Activated CD8-positive, alpha-beta T cell treated with anti-CD3 and anti-CD28 coated beads for 36 hours (primary cell): ENCODE measurements at regions of chr7 and their contacts with region 1.

Region 1: GRCh38 chr7:28389504-28390395 is 22.6 kb upstream of the CREB5 start:
- DNase-seq: peak; percentile 3
- ATAC-seq: no peak
- H3K4me3 Mint-ChIP-seq: no peak overlapping the region
- H3K27ac Mint-ChIP-seq: no peak overlapping the region
- H3K4me1 Mint-ChIP-seq: no peaks in the 10 kb centered on the region
- H3K27me3 Mint-ChIP-seq: peaks cover 17% of the 10 kb centered on the region
- CTCF ChIP-seq: peak; percentile 74

Region 2: GRCh38 chr7:28378574-28379149 is 11.1 kb before region 1 on chr7:
- CTCF ChIA-PET with region 1: no interaction called
- POLR2A ChIA-PET with region 1: no interaction called
- intact Hi-C with region 1: no loop called
- DNase-seq: no peak
- ATAC-seq: no peak
- H3K4me3 Mint-ChIP-seq: no peak overlapping the region
- H3K27ac Mint-ChIP-seq: no peak overlapping the region
- H3K4me1 Mint-ChIP-seq: no peaks in the 10 kb centered on the region
- H3K27me3 Mint-ChIP-seq: peaks cover 3% of the 10 kb centered on the region
- CTCF ChIP-seq: no peak

Region 3: DNA sequence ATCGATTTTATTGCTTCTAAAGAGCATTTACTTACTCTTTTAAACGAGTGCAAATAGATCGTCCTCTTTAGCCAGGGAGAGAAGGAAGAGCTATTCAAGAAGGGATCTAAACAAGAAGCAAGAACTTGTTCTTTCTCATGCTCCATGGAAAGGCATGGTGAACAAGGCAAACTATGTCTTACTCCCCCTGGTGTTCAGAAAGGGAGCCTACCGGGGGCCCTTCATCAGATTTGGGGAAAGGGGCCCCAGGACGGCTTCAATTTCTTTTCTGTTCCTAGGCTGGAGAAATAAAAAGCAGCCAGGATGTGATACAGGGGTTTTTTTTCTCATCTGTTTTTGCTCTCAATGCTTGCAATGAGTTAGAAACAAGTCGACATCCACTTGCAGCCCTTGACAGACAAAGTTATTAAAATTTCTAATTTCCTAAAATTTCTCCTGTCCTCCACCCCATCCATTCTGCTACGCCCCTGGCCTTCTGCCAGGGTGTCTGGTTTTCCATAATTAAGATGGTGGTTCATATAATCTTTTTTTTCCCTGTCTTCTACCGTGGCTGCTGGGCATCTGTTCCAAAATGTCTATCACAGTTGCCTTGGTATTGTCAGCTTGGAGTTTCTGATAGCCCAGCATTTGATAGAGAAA is 237.0 kb after region 1 on chr7:
- CTCF ChIA-PET with region 1: interaction called, 3 read pairs
- POLR2A ChIA-PET with region 1: no interaction called
- intact Hi-C with region 1: loop called (anchors 5 kb)
- DNase-seq: peak; percentile 39
- ATAC-seq: no peak
- H3K4me3 Mint-ChIP-seq: no peak overlapping the region
- H3K27ac Mint-ChIP-seq: no peak overlapping the region
- H3K4me1 Mint-ChIP-seq: no peaks in the 10 kb centered on the region
- H3K27me3 Mint-ChIP-seq: no peaks in the 10 kb centered on the region
- CTCF ChIP-seq: peak; percentile 55

Region 4: GRCh38 chr7:28853834-28854749 is 464.3 kb after region 1 on chr7:
- CTCF ChIA-PET with region 1: interaction called, 5 read pairs
- POLR2A ChIA-PET with region 1: no interaction called
- intact Hi-C with region 1: loop called (anchors 5 kb)
- DNase-seq: peak; percentile 76
- ATAC-seq: peak; percentile 99
- H3K4me3 Mint-ChIP-seq: peak overlapping the region; percentile 62
- H3K27ac Mint-ChIP-seq: no peak overlapping the region
- H3K4me1 Mint-ChIP-seq: peaks cover 7% of the 10 kb centered on the region
- H3K27me3 Mint-ChIP-seq: peaks cover 46% of the 10 kb centered on the region
- CTCF ChIP-seq: peak; percentile 73

Region 5: DNA sequence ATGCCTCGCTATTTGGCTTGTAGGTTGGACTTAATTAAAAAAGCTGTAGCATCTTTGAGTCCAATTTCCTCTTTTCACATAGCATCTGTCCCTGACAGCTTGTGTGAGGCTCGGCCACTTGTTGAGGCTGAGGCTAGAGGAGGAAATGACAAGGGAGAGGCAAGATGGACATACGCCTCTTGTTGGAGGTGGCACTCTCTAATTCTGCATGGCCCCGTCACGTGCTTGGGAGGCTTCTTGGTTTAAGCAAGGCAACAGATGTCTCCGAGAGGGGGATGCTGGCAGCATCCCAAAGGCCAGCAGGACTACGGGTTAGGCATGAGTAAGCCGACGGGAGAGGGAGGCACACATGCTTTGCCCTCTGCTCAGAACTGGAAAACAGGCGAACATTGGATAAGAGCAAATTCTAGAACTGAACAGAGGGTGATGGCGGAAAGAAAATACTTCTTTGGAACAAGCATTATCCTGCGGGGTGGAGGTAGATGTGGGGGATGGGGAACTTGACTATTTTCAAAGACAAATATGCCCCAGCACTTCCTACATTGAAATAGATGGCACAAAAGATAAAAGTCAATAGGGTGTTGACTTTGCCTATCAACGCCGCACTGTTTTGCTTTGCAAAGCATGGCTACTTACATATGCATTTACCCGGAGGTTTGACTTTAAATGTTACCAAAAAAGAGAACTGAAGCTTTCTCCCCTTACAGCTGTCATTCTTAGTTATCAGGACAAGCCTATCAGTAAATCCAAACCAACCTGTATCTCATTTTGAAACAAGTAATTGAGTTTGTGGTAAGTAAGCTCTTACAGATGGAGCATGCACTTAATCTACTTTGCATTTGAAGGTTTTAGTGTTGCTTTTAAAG is 899.6 kb after region 1 on chr7:
- CTCF ChIA-PET with region 1: no interaction called
- POLR2A ChIA-PET with region 1: no interaction called
- intact Hi-C with region 1: no loop called
- DNase-seq: no peak
- ATAC-seq: no peak
- H3K4me3 Mint-ChIP-seq: no peak overlapping the region
- H3K27ac Mint-ChIP-seq: no peak overlapping the region
- H3K4me1 Mint-ChIP-seq: peaks cover 32% of the 10 kb centered on the region
- H3K27me3 Mint-ChIP-seq: peaks cover 4% of the 10 kb centered on the region
- CTCF ChIP-seq: no peak